ENCODE measurements at regions of chr16 and their contacts with region 1.

Region 1: DNA sequence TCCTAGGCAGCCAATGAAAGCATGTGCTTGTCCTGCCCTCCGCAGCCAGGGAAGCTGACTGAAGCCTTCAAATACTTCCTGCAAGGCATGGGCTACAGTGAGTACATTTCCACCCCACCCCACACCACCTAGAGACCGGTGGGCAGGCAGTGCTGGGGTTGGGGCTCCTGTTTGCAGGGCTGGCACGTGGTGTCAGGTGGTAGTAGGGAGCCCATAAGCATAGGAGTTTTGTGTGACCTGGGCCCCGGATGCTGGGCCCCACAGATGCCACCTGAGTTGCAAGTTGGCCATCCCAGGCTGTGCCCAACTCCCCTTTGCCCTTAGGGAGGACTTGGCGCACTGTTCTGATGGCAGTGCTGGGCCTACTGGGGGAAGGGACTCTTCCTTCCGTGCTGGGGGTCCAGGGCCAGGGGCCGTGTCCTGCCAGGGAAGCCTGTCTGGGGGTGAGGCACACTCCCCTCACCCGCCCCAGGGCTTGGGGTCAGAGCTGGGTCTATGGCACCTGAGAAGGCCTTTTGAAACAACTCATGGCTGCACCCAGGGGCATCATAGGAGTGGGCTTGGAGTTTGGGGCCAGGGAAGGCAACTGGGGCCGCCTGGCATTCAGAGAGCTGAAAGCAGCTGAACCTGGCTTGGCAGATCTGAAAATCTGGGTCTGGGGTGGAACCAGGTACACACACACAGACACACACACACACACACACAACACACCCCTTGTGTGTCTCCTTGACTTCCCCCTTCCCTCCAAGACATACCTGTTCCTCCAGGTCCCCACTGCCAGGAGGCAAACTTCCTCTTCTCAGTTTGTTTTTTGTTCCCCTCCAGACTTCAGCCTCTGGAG is 5.8 kb upstream of the SETD6 start:
- DNase-seq: no peak
- H3K4me3 ChIP-seq: no peak overlapping the region
- H3K27ac ChIP-seq: no peak overlapping the region
- H3K4me1 ChIP-seq: peaks cover 0 to 12% (median 6%) of the 10 kb centered on the region in 4 experiments
- H3K27me3 ChIP-seq: no peaks in the 10 kb centered on the region

Region 2: GRCh38 chr16:58418601-58419000 is 90.9 kb before region 1 on chr16:
- CTCF ChIA-PET with region 1: no interaction called
- POLR2A ChIA-PET with region 1: no interaction called
- DNase-seq: no peak
- H3K4me3 ChIP-seq: no peak overlapping the region
- H3K27ac ChIP-seq: no peak overlapping the region
- H3K4me1 ChIP-seq: peaks cover 0 to 3% (median 0%) of the 10 kb centered on the region in 4 experiments
- H3K27me3 ChIP-seq: peaks cover 0 to 35% (median 15%) of the 10 kb centered on the region in 5 experiments

Region 3: DNA sequence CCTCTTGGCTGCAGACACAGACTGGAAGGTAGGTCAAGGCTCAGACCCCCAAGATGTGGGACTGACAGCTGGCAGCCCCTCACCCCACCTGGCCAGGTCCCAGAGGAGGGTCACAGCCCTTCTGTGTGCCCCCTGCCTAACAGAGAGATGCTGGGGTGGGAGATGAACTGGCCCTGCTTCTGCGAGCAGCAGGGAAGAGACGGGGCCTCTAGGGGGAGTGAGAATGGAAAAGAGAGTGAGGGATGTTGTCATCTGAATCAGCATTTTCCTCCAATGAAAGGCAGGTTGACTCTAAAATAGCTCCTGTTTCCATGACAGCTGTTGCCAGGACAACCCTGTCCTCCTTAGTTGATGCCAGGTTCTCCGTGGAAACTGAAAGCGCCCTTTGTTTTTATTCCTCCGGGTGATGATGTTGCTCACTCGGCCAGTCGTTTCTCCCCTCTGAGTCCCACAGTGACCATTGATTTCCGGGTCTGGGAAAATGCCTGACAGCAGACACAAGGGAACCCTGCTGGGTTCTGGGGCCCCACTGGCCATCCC is 14.4 kb before region 1 on chr16:
- CTCF ChIA-PET with region 1: interaction called, 11 read pairs
- POLR2A ChIA-PET with region 1: no interaction called
- DNase-seq: peak; percentile 98 to 99 (median 98)
- H3K4me3 ChIP-seq: peak overlapping the region in 2 of 7 experiments; percentile 14 to 32
- H3K27ac ChIP-seq: no peak overlapping the region
- H3K4me1 ChIP-seq: peaks cover 0 to 11% (median 5%) of the 10 kb centered on the region in 4 experiments
- H3K27me3 ChIP-seq: peaks cover 0 to 13% (median 2%) of the 10 kb centered on the region in 5 experiments

Measured in common myeloid progenitor, CD34-positive (primary cell).